IMR-90 (cell line): ENCODE measurements at regions of chr1 and their contacts with region 1.

Region 1: GRCh38 chr1:182604169-182605164 is at the start of gene RGS16:
- DNase-seq: peak; percentile 62
- ATAC-seq: peak; percentile 99
- H3K4me3 ChIP-seq: peak within 1 kb of the TSS; percentile 28
- H3K27ac ChIP-seq: no peak within 1 kb of the TSS
- H3K4me1 ChIP-seq: peaks cover 2% of the 10 kb centered on the region; the same call in 1 of the 2 replicates
- H3K27me3 ChIP-seq: peaks cover 13% of the 10 kb centered on the region
- CTCF ChIP-seq: no peak
- POLR2A ChIP-seq: no peak
- RAD21 ChIP-seq: no peak
- total RNA-seq, gene RGS16: 0.18 and 0.28 TPM in 2 replicates

Region 2: DNA sequence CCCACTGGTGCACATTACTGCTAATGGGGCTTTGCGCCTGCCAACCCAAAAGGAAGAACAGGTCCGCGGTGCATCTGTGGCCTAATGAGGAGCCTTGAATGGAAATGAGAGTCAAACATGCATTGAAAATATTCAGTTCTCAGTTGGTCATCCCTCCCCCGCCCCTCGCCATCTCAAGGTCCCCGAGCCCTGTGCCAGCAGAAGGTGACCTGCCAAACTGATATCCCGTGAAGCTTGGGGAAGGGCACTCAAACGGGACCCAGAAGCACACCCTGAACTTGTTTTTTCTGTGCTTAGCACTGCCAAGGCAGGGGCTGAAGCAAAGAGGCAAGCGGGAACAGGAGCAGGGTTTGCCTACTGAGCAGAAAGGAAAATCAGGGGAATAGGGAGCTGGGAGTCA is 475.1 kb before region 1 on chr1:
- CTCF ChIA-PET with region 1: no interaction called
- POLR2A ChIA-PET with region 1: no interaction called
- dilution Hi-C with region 1: no loop called
- in situ Hi-C with region 1: no loop called
- intact Hi-C with region 1: no loop called
- DNase-seq: no peak
- ATAC-seq: no peak
- H3K4me3 ChIP-seq: no peak overlapping the region
- H3K27ac ChIP-seq: no peak overlapping the region
- H3K4me1 ChIP-seq: no peaks in the 10 kb centered on the region
- H3K27me3 ChIP-seq: no peaks in the 10 kb centered on the region
- CTCF ChIP-seq: no peak
- POLR2A ChIP-seq: no peak
- RAD21 ChIP-seq: no peak

Region 3: DNA sequence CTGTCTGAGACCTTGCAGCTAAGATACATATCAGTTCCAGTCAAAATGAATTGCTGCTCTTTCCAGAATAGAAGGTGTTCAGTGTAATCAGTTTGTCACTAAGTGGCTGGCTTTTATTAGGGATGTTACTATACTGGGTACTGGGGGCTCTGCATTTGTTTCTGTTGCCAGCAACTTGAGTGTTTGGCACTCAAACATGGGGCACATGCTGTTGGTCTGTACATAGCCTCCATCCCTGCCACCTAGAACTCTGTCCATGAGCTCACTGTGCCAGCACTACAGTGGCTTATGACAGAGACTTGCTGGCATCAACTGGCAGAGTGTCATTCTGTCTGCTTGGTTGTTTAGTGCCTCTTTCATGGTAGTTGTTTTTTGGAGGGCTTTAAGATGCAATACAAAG is 109.5 kb before region 1 on chr1:
- CTCF ChIA-PET with region 1: no interaction called
- POLR2A ChIA-PET with region 1: no interaction called
- dilution Hi-C with region 1: no loop called
- in situ Hi-C with region 1: no loop called
- intact Hi-C with region 1: no loop called
- DNase-seq: no peak
- ATAC-seq: no peak
- H3K4me3 ChIP-seq: no peak overlapping the region
- H3K27ac ChIP-seq: no peak overlapping the region
- H3K4me1 ChIP-seq: no peaks in the 10 kb centered on the region
- H3K27me3 ChIP-seq: no peaks in the 10 kb centered on the region
- CTCF ChIP-seq: no peak
- POLR2A ChIP-seq: no peak
- RAD21 ChIP-seq: no peak

Region 4: DNA sequence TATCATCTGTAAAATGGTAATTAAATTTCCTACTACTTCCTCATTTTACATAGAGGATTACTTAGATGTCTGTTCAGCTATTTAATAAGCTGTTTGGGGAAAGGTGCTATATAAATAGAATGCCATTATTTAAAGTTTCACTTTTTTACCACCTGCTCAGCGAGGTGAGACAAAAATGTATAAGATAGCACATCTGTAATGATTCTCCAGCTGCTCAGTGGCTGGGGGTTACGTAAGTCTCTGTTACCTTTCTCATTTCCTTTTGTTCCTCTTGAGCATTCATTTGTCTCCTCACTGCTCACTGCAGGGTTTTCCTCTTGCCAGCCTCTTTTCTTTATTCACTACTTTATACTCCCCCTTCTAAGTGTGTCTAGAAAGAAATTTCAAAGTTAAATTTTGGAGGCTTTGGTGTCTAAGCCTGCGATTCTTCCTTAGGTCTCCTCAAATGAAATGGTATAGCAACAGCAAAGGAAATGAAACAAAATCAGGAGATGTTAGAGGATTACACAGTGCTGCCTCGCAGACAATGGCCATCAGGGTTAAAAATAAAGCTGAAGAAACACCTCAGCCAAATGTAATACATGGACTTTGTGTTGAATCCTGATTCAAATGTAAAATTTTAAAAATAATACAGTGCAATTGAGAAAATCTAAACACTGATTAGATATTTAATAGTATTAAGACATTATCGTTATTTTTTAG is 73.1 kb after region 1 on chr1:
- CTCF ChIA-PET with region 1: no interaction called
- POLR2A ChIA-PET with region 1: no interaction called
- dilution Hi-C with region 1: no loop called
- in situ Hi-C with region 1: no loop called
- intact Hi-C with region 1: no loop called
- DNase-seq: no peak
- ATAC-seq: no peak
- H3K4me3 ChIP-seq: no peak overlapping the region
- H3K27ac ChIP-seq: no peak overlapping the region
- H3K4me1 ChIP-seq: no peaks in the 10 kb centered on the region
- H3K27me3 ChIP-seq: peaks cover 11% of the 10 kb centered on the region
- CTCF ChIP-seq: no peak
- POLR2A ChIP-seq: no peak
- RAD21 ChIP-seq: no peak

Region 5: DNA sequence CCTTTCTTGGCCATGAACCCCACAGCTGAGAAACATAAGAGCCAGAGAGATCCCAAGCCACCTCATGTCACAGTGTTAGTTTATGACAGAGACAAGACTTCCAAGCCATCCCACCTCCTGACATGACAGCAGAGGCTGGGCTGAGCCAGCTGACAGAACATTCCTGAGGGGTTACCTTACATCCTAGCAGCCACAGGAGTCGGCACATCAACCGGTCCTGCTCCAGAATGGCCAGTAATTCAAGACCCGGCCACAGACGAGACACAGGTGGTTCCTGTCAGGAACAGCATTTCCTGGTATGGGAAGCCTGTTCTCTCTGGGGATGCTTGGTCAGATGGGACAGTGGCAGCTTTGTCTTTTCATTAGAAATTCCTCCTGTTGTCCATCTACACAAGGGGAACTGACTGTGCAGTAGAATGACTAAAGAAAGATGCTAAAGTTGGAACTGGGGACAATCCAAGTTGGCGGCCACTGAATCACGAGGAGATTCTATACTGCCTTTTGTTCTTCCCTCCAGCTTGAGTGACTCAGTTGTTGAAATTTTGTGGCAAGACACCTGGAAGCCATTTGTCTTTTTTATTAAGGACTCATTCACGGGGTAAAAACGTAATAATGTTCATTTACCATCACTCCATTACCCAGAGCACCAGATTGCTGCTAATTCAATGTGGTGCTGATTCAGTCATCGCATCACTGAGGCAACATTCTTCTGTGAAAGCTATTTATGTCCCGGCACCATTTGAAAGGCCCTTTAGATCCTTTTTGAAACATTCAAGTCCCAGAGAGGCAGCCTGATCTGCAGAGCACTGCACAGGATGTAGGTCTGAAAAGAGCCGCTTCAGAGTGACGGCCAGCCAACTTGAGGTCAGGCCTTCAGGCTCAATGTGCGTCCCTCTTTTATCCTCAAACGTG is 147.9 kb after region 1 on chr1:
- CTCF ChIA-PET with region 1: no interaction called
- POLR2A ChIA-PET with region 1: interaction called, 11 read pairs
- dilution Hi-C with region 1: no loop called
- in situ Hi-C with region 1: no loop called
- intact Hi-C with region 1: no loop called
- DNase-seq: peak; percentile 62
- ATAC-seq: no peak; the same call in 1 of the 2 replicates
- H3K4me3 ChIP-seq: no peak overlapping the region
- H3K27ac ChIP-seq: no peak overlapping the region
- H3K4me1 ChIP-seq: peaks cover 2% of the 10 kb centered on the region
- H3K27me3 ChIP-seq: no peaks in the 10 kb centered on the region
- CTCF ChIP-seq: no peak
- POLR2A ChIP-seq: no peak
- RAD21 ChIP-seq: no peak

Region 6: GRCh38 chr1:182839209-182840065 is 235.0 kb after region 1 on chr1 and contains the start of gene DHX9:
- CTCF ChIA-PET with region 1: interaction called, 4 read pairs
- POLR2A ChIA-PET with region 1: no interaction called
- dilution Hi-C with region 1: no loop called
- in situ Hi-C with region 1: no loop called
- intact Hi-C with region 1: loop called (anchors 5 kb)
- DNase-seq: peak; percentile 85
- ATAC-seq: peak; percentile 89
- H3K4me3 ChIP-seq: peak within 1 kb of the TSS; percentile 75
- H3K27ac ChIP-seq: peak within 1 kb of the TSS; percentile 94
- H3K4me1 ChIP-seq: peaks cover 2% of the 10 kb centered on the region; the same call in 1 of the 2 replicates
- H3K27me3 ChIP-seq: no peaks in the 10 kb centered on the region
- CTCF ChIP-seq: peak; percentile 26; the same call in 1 of the 2 replicates
- POLR2A ChIP-seq: peak; percentile 97
- RAD21 ChIP-seq: no peak
- total RNA-seq, gene DHX9: 211 and 234 TPM in 2 replicates

Region 7: DNA sequence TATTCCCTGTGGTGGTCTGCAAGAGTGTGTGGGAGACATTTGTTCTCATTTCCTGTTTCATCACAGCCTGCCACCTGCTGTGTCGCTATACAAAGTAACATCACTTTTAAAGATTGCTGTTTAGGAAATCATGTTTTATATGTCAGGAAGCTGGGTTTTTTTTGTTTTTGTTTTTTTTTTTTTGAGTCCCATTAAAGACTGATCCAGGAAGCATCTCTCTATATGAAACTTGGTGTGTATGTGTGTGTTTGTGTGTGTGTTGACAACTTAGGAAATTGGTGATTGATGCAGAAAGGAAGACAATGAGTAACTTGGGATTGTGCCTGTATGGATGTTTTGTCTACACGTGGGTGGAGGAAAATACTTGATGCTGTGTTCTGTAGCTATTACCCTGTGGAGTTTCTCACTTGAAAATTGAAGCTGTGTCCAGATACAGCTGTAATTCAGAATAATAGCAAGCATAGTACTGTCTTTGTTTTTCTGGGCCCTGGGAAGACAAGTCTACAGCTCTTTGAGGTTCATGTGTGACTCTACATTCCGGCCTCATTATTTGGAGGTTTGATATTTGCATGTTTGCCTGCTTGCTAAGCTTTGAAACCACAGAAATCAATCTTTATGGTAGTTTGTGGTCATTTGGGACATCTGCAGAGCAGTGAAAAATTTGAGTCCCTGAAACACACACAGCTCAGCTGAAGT is 466.6 kb after region 1 on chr1:
- CTCF ChIA-PET with region 1: no interaction called
- POLR2A ChIA-PET with region 1: no interaction called
- dilution Hi-C with region 1: no loop called
- in situ Hi-C with region 1: no loop called
- intact Hi-C with region 1: no loop called
- DNase-seq: peak; percentile 95
- ATAC-seq: peak; percentile 73
- H3K4me3 ChIP-seq: no peak overlapping the region
- H3K27ac ChIP-seq: no peak overlapping the region
- H3K4me1 ChIP-seq: peaks cover 25% of the 10 kb centered on the region
- H3K27me3 ChIP-seq: no peaks in the 10 kb centered on the region
- CTCF ChIP-seq: no peak
- POLR2A ChIP-seq: no peak
- RAD21 ChIP-seq: no peak